ENCODE measurements at regions of chr2 and their contacts with region 1.

Region 1: DNA sequence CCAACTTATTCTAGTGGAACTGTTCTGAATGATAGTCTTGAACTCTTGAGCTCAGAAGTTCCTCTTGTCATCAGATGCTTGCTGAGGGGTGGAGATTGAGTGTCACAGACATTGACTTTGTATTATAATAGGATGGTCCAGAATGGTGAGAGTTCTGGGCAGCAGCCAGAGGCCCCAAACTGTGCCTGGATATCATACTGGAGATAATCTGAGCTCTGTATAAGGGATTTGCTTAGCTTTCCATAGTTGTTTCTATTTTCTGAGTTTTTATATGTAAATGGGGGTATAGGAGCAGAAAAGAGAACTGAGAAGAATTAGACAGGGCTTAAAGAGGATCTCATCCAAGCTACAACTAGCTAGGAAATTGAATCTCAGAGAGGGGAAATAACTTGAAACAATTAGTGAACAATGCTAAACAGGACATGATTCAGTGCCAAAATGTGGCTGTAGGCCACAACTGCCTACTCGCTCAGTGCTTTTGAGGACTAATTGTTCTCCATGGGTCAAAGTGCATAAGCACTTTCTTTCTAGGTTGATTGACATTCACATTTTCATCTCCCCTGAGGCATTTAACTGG is 10.1 kb upstream of the LCLAT1 start:
- DNase-seq: no peak
- ATAC-seq: peak; percentile 34

Region 2: DNA sequence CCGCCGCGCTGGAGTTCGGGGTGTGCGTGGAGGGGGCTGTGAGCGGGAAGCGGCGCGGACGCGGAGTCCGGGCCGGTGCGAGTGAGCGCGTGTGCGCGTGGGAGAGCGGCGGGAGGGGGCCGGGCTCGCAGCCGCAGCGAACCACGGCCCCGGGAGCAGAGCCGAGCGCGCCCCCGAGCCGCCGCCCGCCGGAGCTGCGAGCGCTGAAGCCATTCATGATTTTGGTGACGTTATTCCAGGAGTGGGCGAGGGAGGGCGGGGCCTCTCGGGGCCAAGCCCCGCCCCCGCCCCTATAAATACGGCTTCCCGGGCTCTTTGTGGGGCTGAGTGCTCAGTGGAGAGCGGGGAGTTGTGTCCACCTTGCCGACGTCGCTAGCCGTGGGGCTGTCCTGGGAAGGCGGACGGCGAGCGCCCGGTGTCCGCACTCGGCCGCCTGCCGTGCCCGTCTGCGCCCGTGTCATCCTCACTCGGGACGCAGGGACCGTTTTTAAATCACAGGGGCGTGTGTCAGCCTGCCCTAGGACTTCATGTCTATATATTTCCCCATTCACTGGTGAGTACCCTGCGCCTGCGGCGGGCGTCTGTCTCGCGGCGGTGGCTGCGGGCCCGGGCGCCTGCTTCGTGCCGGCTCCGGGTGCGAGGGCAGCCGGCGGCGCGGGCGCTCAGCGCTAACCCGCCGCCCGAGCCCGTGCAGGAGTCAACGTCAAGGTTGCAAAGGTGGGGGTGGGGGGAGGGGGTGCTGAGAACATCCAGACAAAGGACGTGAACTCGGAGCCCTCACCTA is 205.5 kb before region 1 on chr2 and contains the start of gene LBH:
- intact Hi-C with region 1: loop called (anchors 5 kb)
- DNase-seq: peak; percentile 92
- ATAC-seq: peak; percentile 83
- total RNA-seq, gene LBH: 133 TPM

Region 3: GRCh38 chr2:30346471-30347169 is 90.3 kb before region 1 on chr2:
- intact Hi-C with region 1: loop called (anchors 5 kb)
- DNase-seq: peak; percentile 80
- ATAC-seq: peak; percentile 97

Measured in Right ventricle myocardium inferior (tissue), 1 donor.